ENCODE measurements at regions of chr10 and their contacts with region 1.

Region 1: DNA sequence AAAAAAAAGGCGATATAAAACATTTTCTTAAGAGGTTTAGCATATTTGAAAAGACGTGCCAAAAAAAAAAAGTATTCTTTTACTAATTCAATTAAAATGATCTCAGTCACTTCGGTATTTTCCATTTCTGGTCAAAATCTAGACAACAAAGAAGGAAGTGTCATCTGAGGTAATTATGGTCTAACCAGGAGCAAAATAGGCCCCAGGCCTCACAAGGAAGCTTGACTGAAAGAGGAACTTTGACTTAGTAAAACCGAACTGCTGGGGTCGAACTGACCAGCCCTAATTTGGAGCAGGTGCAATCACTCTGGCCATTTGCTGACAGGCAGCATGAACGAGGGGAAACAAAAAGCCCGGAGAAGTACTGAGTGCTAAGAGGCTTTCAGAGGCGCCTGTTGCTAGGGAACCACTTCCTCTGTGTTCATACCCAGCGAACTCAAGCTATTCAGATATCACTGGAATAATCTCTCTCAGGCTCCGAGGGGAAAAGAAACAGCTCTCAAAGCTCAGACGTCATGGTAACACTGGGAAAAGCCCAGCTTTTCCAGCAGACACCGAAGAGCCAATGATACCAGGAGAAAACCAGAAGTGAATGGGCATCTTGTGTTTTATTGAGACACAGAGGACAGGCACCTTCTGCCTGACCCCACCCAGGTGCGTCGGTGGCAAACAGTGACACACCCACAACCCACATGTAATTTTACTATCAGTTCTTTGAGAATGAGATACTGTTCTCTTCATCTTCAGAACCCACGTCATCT is 126.5 kb downstream of the FAM107B start:
- DNase-seq: peak; percentile 83
- H3K4me3 Mint-ChIP-seq: peak overlapping the region; percentile 75
- H3K27ac Mint-ChIP-seq: peak overlapping the region; percentile 98
- H3K4me1 Mint-ChIP-seq: peaks cover 69% of the 10 kb centered on the region
- H3K27me3 Mint-ChIP-seq: no peaks in the 10 kb centered on the region

Region 2: DNA sequence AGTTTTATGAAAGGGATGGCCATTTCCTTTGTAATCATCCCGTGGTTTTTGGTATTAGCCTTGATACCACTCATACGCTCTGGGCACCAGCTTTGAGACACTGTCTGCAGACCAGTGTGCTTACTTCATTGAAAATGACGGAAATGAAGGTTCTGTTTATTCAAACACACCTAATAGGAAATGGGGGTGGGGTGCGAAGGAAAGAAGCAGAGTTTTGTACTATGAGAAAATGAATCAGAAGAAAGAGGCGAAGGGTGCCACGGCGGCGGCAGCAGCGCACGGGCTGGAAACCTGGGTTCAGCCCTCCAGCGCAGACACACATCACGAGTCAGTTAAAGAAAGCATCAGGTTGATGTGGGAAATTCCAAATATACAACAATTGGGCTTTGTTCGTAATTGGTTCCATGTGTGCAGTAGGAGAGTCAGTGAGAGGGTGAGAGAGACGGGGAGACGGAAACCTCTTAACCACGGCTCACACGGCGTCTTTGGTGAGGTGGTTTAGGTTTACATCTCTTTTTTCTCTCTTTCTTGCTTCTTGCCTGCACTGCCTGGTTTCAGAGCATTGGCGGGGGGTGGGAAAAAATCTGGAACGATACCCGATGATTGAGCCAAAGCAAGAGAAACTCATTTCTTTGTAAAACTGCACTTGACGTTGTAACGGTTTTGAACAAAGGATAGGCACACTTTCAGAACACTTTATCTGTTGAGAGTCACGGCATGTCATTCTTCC is 638.6 kb before region 1 on chr10:
- CTCF ChIA-PET with region 1: no interaction called
- intact Hi-C with region 1: loop called (anchors 5 kb)
- DNase-seq: peak; percentile 84
- H3K4me3 Mint-ChIP-seq: peak overlapping the region; percentile 79
- H3K27ac Mint-ChIP-seq: peak overlapping the region; percentile 90
- H3K4me1 Mint-ChIP-seq: peaks cover 35% of the 10 kb centered on the region
- H3K27me3 Mint-ChIP-seq: no peaks in the 10 kb centered on the region

Region 3: GRCh38 chr10:14527134-14527844 is 120.9 kb before region 1 on chr10:
- CTCF ChIA-PET with region 1: interaction called, 3 read pairs
- intact Hi-C with region 1: loop called (anchors 1 kb)
- DNase-seq: no peak
- H3K4me3 Mint-ChIP-seq: no peak overlapping the region
- H3K27ac Mint-ChIP-seq: peak overlapping the region; percentile 81
- H3K4me1 Mint-ChIP-seq: peaks cover 78% of the 10 kb centered on the region
- H3K27me3 Mint-ChIP-seq: no peaks in the 10 kb centered on the region

Region 4: DNA sequence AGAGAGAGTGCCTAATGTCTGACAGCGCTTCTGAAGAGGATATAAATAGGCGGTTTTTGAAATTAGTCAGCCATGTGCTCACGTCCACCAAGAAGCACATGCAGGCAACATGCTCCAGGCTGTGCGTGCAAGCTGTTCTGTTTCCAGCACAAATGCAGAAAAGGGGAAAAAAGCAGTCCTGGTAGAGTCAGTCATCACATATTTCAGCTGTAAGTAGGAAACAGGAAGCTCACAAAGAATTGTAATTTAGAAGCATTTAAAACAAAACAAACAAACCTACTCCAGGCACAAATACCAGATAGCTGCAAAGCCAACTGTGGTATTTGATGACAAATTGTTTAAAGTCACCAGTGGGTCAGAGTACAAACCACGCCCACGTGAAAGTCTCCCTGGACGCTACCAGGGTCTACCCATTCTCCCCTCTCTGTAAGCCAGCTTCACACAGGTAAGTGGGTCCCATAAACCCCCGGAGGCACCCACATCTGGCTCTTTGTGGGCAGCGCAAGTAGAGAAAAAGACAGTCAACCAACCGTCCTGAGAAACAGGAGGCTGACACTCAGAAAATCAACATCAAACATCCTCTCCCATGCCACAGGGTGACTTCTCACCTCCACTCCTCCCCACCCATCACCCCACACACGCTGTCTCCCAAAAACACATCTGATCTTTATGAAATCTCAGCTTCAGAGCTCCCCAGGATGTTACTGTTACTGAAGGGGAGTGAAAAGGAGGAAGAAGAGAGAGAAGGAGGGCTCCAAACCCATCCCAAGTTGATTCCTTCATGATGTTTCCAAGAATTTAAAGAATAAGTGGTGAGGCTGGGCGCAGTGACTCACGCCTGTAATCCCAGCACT is 59.9 kb before region 1 on chr10:
- CTCF ChIA-PET with region 1: no interaction called
- intact Hi-C with region 1: loop called (anchors 1 kb)
- DNase-seq: peak; percentile 83
- H3K4me3 Mint-ChIP-seq: peak overlapping the region; percentile 63
- H3K27ac Mint-ChIP-seq: peak overlapping the region; percentile 97
- H3K4me1 Mint-ChIP-seq: peaks cover 90% of the 10 kb centered on the region
- H3K27me3 Mint-ChIP-seq: no peaks in the 10 kb centered on the region

Region 5: DNA sequence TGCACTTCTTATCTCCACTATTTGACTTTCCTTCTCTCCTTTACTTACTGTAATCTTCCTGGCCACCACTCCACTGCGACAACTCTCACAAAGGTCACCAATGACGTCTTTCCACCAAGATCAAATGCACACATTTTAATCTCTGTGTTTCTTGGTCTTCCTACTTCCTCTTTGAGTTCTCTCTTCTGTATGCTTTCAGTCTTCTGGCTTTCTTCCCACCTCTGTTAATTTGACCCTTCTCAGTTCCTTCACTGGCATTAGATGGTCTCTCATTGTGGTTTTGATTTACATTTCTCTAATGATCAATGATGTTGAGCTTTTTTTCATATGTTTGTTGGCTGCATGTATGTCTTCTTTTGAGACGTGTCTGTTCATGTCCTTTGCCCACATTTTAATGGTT is 94.6 kb after region 1 on chr10:
- CTCF ChIA-PET with region 1: no interaction called
- intact Hi-C with region 1: loop called (anchors 1 kb)
- DNase-seq: peak; percentile 18
- H3K4me3 Mint-ChIP-seq: no peak overlapping the region
- H3K27ac Mint-ChIP-seq: peak overlapping the region; percentile 64
- H3K4me1 Mint-ChIP-seq: peaks cover 31% of the 10 kb centered on the region
- H3K27me3 Mint-ChIP-seq: no peaks in the 10 kb centered on the region

Region 6: DNA sequence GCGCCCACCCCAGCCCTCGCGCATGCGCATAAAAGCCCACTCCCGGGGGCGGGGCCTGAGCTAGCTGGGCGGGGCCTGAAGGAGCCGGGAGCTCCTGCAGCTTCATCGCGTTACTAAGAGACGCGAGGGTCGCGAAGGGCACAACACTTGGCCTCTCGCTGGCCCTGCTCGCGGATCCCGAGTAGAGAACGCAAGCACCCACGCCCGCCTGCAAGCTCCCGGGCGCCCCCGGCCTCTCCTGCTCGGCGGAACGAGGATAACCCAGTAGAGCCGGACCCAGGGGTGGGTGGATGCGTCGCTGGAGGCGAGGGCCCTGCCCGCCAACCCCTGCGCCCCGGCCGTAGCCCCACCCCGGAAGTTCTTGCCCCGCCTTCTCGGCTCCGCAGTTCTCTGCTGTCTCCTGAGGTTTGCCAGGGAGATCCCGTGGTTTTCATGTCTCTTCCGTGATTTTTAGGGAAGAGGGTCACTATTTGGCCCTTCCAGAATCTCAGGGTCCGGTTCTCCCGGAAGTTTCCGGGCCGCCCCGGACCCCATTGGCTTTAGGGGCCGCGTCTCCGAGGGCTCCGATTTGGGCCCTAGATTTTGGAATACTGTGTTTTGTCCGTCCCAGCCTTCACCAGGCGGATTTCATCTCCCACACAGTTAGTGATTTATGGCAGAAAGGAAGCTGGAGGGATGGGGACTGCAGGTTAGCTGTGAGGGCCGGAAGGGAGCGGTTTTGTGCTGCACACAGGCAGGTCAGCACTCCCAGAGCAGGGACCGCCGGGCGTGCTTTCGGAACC is 311.3 kb after region 1 on chr10 and contains the start of gene MEIG1:
- CTCF ChIA-PET with region 1: no interaction called
- intact Hi-C with region 1: loop called (anchors 1 kb)
- DNase-seq: peak; percentile 91
- H3K4me3 Mint-ChIP-seq: peak within 1 kb of the TSS; percentile 98
- H3K27ac Mint-ChIP-seq: peak within 1 kb of the TSS; percentile 98
- H3K4me1 Mint-ChIP-seq: peaks cover 27% of the 10 kb centered on the region
- H3K27me3 Mint-ChIP-seq: no peaks in the 10 kb centered on the region
- total RNA-seq, gene MEIG1: 0.81 to 0.93 TPM

Region 7: GRCh38 chr10:15585303-15585715 is 937.1 kb after region 1 on chr10:
- CTCF ChIA-PET with region 1: no interaction called
- intact Hi-C with region 1: no loop called
- DNase-seq: peak; percentile 64
- H3K4me3 Mint-ChIP-seq: no peak overlapping the region
- H3K27ac Mint-ChIP-seq: no peak overlapping the region
- H3K4me1 Mint-ChIP-seq: no peaks in the 10 kb centered on the region
- H3K27me3 Mint-ChIP-seq: peaks cover 9% of the 10 kb centered on the region